ENCODE measurements at regions of chr5 and their contacts with region 1.

Region 1: DNA sequence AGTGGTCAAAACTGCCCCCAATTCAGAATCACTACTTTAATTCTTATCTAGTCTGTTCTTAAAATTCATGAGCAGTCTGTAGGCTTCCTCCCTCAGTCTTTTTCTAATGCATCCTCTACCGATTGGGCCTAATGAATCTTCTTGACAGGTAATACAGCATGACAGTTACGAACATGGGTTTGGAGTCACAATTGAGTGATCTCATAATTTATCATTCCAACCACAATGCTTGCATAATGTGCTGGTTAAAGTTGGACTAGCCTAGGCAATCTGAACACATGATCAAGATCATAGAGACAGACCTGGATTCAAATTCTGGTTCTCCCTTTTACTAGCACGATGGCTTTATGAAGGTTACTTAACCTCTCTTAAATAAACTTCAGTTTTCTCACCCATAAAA is 33.1 kb upstream of the SETD9 start:
- DNase-seq: no peak
- H3K4me3 ChIP-seq: no peak overlapping the region
- H3K4me3 Mint-ChIP-seq: no peak overlapping the region
- H3K27ac ChIP-seq: no peak overlapping the region
- H3K27ac Mint-ChIP-seq: peak overlapping the region in 2 of 7 donors; percentile 0 to 43
- H3K4me1 ChIP-seq: peaks cover 21% of the 10 kb centered on the region
- H3K4me1 Mint-ChIP-seq: peaks cover 28 to 45% (median 30%) of the 10 kb centered on the region in 4 donors
- H3K27me3 ChIP-seq: no peaks in the 10 kb centered on the region
- H3K27me3 Mint-ChIP-seq: no peaks in the 10 kb centered on the region

Region 2: DNA sequence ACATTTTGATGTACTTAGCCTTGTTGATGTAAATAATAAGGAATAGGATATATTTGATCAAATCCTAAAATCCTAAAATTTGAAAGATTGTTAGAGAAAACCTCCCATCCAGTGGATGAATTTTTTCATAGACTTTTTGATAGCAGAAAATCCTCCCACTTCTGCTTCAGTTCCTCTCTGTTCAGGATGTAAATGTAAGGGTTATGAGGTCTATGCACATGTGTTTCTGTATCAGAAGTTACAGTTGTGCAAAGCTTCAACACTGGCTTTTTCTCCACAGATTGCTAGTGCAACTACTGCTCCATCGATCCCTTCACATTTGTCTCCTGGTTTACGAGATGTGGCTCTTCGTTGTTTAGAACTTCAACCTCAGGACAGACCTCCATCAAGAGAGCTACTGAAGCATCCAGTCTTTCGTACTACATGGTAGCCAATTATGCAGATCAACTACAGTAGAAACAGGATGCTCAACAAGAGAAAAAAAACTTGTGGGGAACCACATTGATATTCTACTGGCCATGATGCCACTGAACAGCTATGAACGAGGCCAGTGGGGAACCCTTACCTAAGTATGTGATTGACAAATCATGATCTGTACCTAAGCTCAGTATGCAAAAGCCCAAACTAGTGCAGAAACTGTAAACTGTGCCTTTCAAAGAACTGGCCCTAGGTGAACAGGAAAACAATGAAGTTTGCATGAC is 17.1 kb after region 1 on chr5:
- CTCF ChIA-PET with region 1: interaction called, 4 read pairs
- POLR2A ChIA-PET with region 1: interaction called, 3 read pairs
- intact Hi-C with region 1: loop called (anchors 2 kb)
- DNase-seq: no peak
- H3K4me3 ChIP-seq: no peak overlapping the region
- H3K4me3 Mint-ChIP-seq: no peak overlapping the region
- H3K27ac ChIP-seq: no peak overlapping the region
- H3K27ac Mint-ChIP-seq: peak overlapping the region in 3 of 7 donors; percentile 21 to 70 (median 42)
- H3K4me1 ChIP-seq: no peaks in the 10 kb centered on the region
- H3K4me1 Mint-ChIP-seq: peaks cover 8 to 26% (median 11%) of the 10 kb centered on the region in 4 donors
- H3K27me3 ChIP-seq: no peaks in the 10 kb centered on the region
- H3K27me3 Mint-ChIP-seq: no peaks in the 10 kb centered on the region

Region 3: DNA sequence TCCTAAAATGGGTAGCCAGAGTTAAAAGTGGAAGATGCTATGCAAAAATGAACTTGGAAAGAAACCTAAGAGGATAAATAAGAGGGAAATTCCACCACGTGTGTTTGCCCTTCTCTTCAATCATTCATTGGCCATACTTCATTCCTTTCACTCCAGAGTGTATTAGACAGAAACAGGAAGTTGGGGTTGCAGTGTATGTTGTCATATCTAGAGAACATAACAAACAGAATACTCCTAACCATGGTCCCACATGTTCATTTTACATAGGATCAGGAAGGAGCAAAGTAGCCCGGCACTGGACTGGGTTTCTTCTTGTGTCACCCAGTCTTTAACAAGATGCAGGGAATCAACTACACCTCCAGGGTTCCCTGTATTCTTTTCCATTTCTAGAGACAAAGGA is 289.9 kb after region 1 on chr5:
- CTCF ChIA-PET with region 1: no interaction called
- POLR2A ChIA-PET with region 1: no interaction called
- intact Hi-C with region 1: no loop called
- DNase-seq: no peak
- H3K4me3 ChIP-seq: no peak overlapping the region
- H3K4me3 Mint-ChIP-seq: no peak overlapping the region
- H3K27ac ChIP-seq: no peak overlapping the region
- H3K27ac Mint-ChIP-seq: no peak overlapping the region
- H3K4me1 ChIP-seq: no peaks in the 10 kb centered on the region
- H3K4me1 Mint-ChIP-seq: peaks cover 0 to 5% (median 4%) of the 10 kb centered on the region in 4 donors
- H3K27me3 ChIP-seq: no peaks in the 10 kb centered on the region
- H3K27me3 Mint-ChIP-seq: no peaks in the 10 kb centered on the region

Measured in CD4-positive, alpha-beta memory T cell (primary cell).